Activated CD4-positive, alpha-beta memory T cell treated with anti-CD3 and anti-CD28 coated beads, Interleukin-2, amount 10 ng/mL, durations not matched to agents 7 days and 5 days (primary cell): ENCODE measurements at regions of chr3 and their contacts with region 1.

Region 1: DNA sequence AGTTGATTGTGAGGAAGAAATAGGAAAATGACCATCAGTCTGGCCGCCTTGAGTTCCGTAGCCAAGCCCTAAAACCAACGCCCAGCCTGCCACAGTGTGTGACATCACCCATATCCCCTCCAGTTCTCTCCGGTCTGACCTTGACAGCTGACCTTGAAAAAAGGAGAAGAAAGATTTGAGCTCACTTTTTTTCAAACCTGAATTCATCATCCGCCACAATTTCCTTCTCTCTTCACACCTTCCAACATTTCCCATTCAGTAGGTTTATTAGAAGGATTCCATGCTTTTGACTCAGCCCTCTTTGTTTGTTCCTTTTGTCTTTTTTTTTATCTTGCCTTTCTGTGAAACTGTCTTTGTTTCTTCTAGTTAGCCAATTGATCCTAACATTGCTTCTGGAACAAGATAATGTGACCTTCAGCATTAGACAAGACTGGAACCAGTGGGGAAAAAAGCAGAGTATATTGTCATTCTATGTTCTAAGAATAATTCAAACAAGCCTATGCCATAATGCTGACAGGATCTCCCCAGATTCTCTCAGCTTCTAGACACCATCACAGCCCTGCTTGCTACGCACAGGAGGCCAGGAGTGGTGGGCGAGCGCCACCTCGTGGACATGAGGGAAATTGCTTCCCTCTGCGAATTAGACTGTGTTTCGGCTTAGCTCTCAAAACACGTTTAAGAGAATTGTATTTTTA is 283.1 kb downstream of the FGF12 start:
- DNase-seq: peak; percentile 63
- H3K4me3 Mint-ChIP-seq: no peak overlapping the region
- H3K27ac Mint-ChIP-seq: no peak overlapping the region
- H3K4me1 Mint-ChIP-seq: no peaks in the 10 kb centered on the region
- H3K27me3 Mint-ChIP-seq: peaks cover 15% of the 10 kb centered on the region

Region 2: DNA sequence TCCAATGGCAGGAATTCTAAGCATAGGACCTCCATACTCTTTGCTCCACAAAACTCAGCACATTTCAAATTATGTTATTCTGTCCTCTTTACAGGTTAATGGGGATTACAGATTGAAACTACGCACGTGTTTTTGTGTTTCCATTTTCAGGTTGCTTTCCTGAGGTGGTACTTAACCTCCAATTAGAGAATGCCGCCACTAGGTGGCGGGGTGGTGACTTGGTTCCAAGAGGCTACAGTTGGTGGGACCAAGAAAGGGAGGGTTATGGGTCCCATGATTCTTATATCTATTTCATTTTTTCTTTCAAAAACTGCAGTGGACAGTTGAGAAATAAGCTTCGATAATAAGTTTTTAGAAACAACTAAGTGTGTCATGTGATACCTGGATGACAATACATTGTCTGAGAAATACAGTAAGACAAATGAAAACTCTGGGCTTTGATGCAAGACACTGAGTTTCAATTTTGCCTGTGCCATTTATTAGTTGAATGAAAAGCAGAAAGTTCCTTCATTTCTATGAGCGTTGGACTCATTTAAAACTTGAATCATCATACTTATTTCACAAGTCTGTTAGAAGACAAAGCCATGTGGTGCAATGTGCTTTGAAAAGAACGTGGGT is 255.9 kb before region 1 on chr3:
- CTCF ChIA-PET with region 1: interaction called, 42 read pairs
- POLR2A ChIA-PET with region 1: no interaction called
- DNase-seq: peak; percentile 42
- H3K4me3 Mint-ChIP-seq: no peak overlapping the region
- H3K27ac Mint-ChIP-seq: no peak overlapping the region
- H3K4me1 Mint-ChIP-seq: peaks cover 3% of the 10 kb centered on the region
- H3K27me3 Mint-ChIP-seq: peaks cover 1% of the 10 kb centered on the region

Region 3: DNA sequence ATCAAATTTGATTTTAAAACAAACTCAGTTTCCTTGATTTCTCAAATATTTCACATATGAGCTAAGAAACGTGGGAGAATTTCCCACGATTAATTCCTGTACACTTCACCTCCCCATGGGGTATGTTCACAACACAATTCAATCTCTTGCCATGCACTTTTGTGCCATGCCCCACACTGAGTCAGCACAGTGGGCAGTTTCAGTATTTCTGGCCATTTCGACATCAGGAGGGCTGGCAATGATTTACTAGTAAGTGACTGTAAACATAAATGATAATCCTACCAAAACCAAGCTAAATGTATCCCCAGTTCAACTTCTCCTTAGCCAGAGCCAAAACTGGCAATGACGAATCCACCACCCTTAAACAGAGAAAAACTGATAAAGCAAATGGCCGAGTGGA is 10.5 kb before region 1 on chr3:
- CTCF ChIA-PET with region 1: interaction called, 26 read pairs
- POLR2A ChIA-PET with region 1: no interaction called
- DNase-seq: no peak
- H3K4me3 Mint-ChIP-seq: no peak overlapping the region
- H3K27ac Mint-ChIP-seq: no peak overlapping the region
- H3K4me1 Mint-ChIP-seq: no peaks in the 10 kb centered on the region
- H3K27me3 Mint-ChIP-seq: peaks cover 1% of the 10 kb centered on the region